Right cardiac atrium (tissue), 5 donors: ENCODE measurements at regions of chr21 and their contacts with region 1.

Region 1: DNA sequence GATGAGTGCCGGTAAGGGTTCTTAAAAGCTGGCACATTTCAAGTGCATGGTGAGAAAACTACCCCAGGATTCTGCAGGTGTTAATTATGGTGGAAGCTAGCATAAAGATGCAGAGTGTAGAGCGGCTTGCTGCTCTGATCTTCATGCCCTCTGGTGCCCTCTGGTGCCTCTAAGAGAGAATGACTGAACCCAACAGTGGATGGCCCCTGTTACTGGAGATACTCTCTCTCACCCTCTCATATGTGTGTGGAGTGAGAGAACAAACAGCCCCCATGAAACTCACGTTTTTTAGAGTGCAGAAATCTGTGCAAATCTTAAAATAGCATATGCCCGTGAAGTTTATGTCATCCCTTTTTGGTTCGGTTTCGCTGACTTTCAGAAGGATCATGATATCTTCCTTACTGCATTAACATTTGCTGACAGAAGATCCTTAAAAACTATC is 90.0 kb downstream of the GRIK1 start:
- DNase-seq: peak in 2 of 3 donors; percentile 26 to 37
- ATAC-seq: peak; percentile 81 to 87
- H3K4me3 ChIP-seq: no peak overlapping the region
- H3K27ac ChIP-seq: no peak overlapping the region
- H3K4me1 ChIP-seq: no peaks in the 10 kb centered on the region
- H3K27me3 ChIP-seq: no peaks in the 10 kb centered on the region

Region 2: DNA sequence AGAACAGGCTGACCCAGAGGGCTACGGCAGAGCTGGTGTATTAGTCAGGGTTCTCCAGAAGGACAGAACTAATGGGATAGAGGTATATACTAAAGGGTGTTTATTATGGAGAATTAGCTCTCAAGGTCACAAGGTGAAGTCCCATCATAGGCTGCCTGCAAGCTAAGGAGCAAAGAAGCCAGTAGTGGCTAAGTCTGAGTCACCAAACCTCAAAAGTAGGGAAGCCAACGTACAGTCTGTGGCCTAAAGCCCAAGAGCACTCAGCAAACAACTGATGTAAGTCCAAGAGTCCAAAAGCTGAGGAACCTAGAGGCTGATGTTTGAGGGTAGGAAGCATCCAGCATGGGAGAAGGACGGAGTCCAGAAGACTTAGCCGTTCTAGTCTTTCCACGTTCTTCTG is 371.8 kb before region 1 on chr21:
- intact Hi-C with region 1: loop called (anchors 5 to 10 kb)
- DNase-seq: no peak
- ATAC-seq: no peak
- H3K4me3 ChIP-seq: no peak overlapping the region
- H3K27ac ChIP-seq: no peak overlapping the region
- H3K4me1 ChIP-seq: no peaks in the 10 kb centered on the region
- H3K27me3 ChIP-seq: no peaks in the 10 kb centered on the region